GM12878 (cell line): ENCODE measurements at regions of chr2 and their contacts with region 1.

Region 1: GRCh38 chr2:9474361-9474967 is at the start of gene IAH1:
- DNase-seq: no peak
- ATAC-seq: peak; percentile 88
- H3K4me3 ChIP-seq: peak within 1 kb of the TSS; percentile 67
- H3K27ac ChIP-seq: peak within 1 kb of the TSS; percentile 90
- H3K4me1 ChIP-seq: peaks cover 12% of the 10 kb centered on the region; the same call in 1 of the 2 replicates
- H3K27me3 ChIP-seq: no peaks in the 10 kb centered on the region
- CTCF ChIP-seq: no peak; a peak in 1 of 6 replicates
- EP300 ChIP-seq: no peak
- POLR2A ChIP-seq: peak; percentile 87
- RAD21 ChIP-seq: no peak
- polyA plus RNA-seq, gene IAH1: 120 to 125 TPM

Region 2: GRCh38 chr2:9410108-9410507 is 64.4 kb before region 1 on chr2:
- CTCF ChIA-PET with region 1: no interaction called
- POLR2A ChIA-PET with region 1: no interaction called
- RAD21 ChIA-PET with region 1: no interaction called
- SMC1A ChIA-PET with region 1: no interaction called
- in situ Hi-C with region 1: no loop called
- intact Hi-C with region 1: no loop called
- DNase-seq: no peak
- ATAC-seq: no peak
- H3K4me3 ChIP-seq: no peak overlapping the region
- H3K27ac ChIP-seq: no peak overlapping the region
- H3K4me1 ChIP-seq: no peaks in the 10 kb centered on the region
- H3K27me3 ChIP-seq: no peaks in the 10 kb centered on the region
- CTCF ChIP-seq: no peak
- EP300 ChIP-seq: no peak
- POLR2A ChIP-seq: no peak
- RAD21 ChIP-seq: no peak

Region 3: GRCh38 chr2:9423100-9423921 is 51.2 kb before region 1 on chr2 and contains the starts of genes CPSF3 and ITGB1BP1:
- CTCF ChIA-PET with region 1: interaction called, 5 read pairs
- POLR2A ChIA-PET with region 1: interaction called, 3 read pairs
- RAD21 ChIA-PET with region 1: no interaction called
- SMC1A ChIA-PET with region 1: interaction called, 5 read pairs
- in situ Hi-C with region 1: no loop called
- intact Hi-C with region 1: loop called (anchors 1 kb)
- DNase-seq: peak; percentile 88
- ATAC-seq: peak; percentile 91
- H3K4me3 ChIP-seq: peak within 1 kb of the TSS; percentile 89
- H3K27ac ChIP-seq: peak within 1 kb of the TSS; percentile 86
- H3K4me1 ChIP-seq: peaks cover 24% of the 10 kb centered on the region
- H3K27me3 ChIP-seq: no peaks in the 10 kb centered on the region
- CTCF ChIP-seq: no peak
- EP300 ChIP-seq: no peak
- POLR2A ChIP-seq: peak; percentile 72
- RAD21 ChIP-seq: no peak
- polyA plus RNA-seq, gene CPSF3: 68.7 to 101 TPM
- polyA plus RNA-seq, gene ITGB1BP1: 58.8 to 115 TPM

Region 4: GRCh38 chr2:9548506-9548905 is 74.0 kb after region 1 on chr2:
- CTCF ChIA-PET with region 1: interaction called, 17 read pairs
- POLR2A ChIA-PET with region 1: interaction called, 7 read pairs
- RAD21 ChIA-PET with region 1: interaction called, 3 read pairs
- SMC1A ChIA-PET with region 1: interaction called, 4 read pairs
- in situ Hi-C with region 1: no loop called
- intact Hi-C with region 1: no loop called
- DNase-seq: no peak
- ATAC-seq: peak; percentile 70
- H3K4me3 ChIP-seq: peak overlapping the region; percentile 64
- H3K27ac ChIP-seq: peak overlapping the region; percentile 83
- H3K4me1 ChIP-seq: peaks cover 67% of the 10 kb centered on the region
- H3K27me3 ChIP-seq: no peaks in the 10 kb centered on the region
- CTCF ChIP-seq: no peak
- EP300 ChIP-seq: 0 out of 4 replicates have a peak, but pooled peaks of 1 of the 2 experiments have one; percentile 4
- POLR2A ChIP-seq: no peak
- RAD21 ChIP-seq: no peak